ENCODE measurements at regions of chr15 and their contacts with region 1.

Region 1: DNA sequence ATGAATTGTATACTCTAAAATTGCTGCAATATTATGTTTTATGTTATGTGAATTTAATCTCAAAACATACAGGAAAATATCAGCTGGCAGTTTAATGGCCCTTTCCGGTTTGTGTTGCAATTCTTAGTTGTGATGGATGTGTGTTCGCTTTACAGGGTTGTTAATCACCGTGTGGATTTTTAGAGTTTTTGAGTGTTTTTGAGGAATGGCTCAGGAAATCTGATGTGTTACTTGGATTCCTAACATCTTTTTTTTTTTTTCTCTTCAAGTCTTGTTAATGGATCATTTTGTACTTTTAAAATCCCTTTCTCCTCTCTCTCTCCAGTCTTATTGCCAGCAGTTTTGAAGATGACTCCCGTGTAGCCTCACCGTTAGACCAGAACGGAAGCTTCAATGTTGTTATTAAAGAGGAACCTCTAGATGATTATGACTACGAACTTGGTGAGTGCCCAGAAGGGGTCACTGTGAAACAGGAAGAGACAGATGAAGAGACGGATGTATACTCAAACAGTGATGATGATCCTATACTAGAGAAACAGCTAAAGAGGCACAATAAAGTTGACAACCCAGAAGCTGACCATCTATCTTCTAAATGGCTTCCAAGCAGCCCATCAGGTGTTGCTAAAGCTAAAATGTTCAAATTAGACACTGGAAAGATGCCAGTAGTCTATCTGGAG is 35.7 kb downstream of the MGA start:
- DNase-seq: peak; percentile 81
- CTCF ChIP-seq: peak; percentile 43

Region 2: DNA sequence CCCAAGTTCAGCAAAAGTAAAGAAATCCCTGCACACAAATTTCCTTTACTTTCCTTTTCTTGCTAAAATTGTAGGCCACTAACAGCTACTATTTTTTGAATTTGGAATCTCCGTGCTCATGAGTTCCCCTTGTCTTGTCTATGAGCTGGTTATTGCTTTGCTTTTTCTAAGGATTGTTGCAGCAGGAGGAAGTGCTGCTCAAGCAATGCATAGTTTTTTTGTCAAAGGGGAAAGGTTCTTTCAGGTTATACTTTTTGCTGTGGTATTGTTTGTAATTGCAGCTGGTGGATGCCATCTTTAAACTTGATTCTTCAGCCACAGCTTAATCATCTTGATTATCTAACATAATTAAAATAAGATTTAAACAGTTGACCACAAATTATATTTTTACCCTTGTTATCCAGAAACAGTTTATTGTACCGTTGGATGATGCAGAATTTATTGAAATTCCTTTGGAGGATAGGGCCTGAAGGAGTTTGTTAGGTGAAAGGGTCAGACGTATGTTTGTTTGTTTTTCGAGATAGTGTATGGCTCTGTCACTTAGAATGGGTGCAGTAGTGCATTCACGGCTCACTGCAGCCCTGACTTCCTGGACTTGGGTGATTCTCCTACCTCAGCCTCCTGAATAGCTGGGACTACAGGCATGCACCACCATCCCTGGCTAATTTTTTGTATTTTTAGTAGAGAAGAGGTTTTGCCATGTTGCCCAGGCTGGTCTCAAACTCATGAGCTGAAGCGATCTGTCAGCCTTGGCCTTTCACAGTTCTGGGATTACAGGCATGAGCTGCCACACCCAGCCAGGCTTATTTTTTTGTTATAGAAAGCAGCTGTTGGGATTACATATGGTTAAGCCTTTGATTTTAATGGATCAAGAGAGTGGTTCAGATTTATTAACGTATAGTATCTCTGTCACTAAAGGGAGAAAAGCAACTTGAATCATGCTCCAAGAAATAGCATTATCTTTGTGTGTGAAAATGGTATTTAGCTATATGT is 23.9 kb before region 1 on chr15:
- CTCF ChIA-PET with region 1: interaction called, 28 read pairs
- POLR2A ChIA-PET with region 1: no interaction called
- DNase-seq: no peak
- CTCF ChIP-seq: no peak